ENCODE measurements at regions of chr16 and their contacts with region 1.

Region 1: GRCh38 chr16:58236231-58236690 is 38.4 kb upstream of the CSNK2A2 start:
- DNase-seq: peak; percentile 51
- ATAC-seq: peak; percentile 98
- H3K4me3 ChIP-seq: peak overlapping the region; percentile 50
- H3K27ac ChIP-seq: no peak overlapping the region
- H3K4me1 ChIP-seq: no peaks in the 10 kb centered on the region; the same call in 1 of the 2 replicates
- H3K27me3 ChIP-seq: peaks cover 13% of the 10 kb centered on the region
- CTCF ChIP-seq: no peak
- POLR2A ChIP-seq: no peak
- RAD21 ChIP-seq: no peak

Region 2: GRCh38 chr16:58222532-58223316 is 13.5 kb before region 1 on chr16:
- CTCF ChIA-PET with region 1: no interaction called
- POLR2A ChIA-PET with region 1: interaction called, 5 read pairs
- dilution Hi-C with region 1: no loop called
- in situ Hi-C with region 1: no loop called
- intact Hi-C with region 1: loop called (anchors 2 kb)
- DNase-seq: peak; percentile 25
- ATAC-seq: peak; percentile 76
- H3K4me3 ChIP-seq: no peak overlapping the region
- H3K27ac ChIP-seq: no peak overlapping the region
- H3K4me1 ChIP-seq: no peaks in the 10 kb centered on the region
- H3K27me3 ChIP-seq: peaks cover 7% of the 10 kb centered on the region
- CTCF ChIP-seq: no peak
- POLR2A ChIP-seq: no peak
- RAD21 ChIP-seq: no peak

Measured in IMR-90 (cell line).